SK-N-SH (cell line): ENCODE measurements at regions of chr14 and their contacts with region 1.

Region 1: GRCh38 chr14:34875031-34875922 is at the start of gene BAZ1A:
- DNase-seq: peak; percentile 78
- H3K4me3 ChIP-seq: peak within 1 kb of the TSS; percentile 86 to 91
- H3K27ac ChIP-seq: peak within 1 kb of the TSS; percentile 95 to 98
- H3K4me1 ChIP-seq: peaks cover 3 to 6% of the 10 kb centered on the region in 2 experiments; a peak in 3 of 4 replicates
- H3K27me3 ChIP-seq: no peaks in the 10 kb centered on the region
- CTCF ChIP-seq: peak; percentile 14; the same call in 1 of the 2 replicates
- EP300 ChIP-seq: no peak
- RAD21 ChIP-seq: no peak
- polyA plus RNA-seq, gene BAZ1A: 17.4 and 19.3 TPM in 2 replicates

Region 2: GRCh38 chr14:34826661-34827060 is 48.6 kb before region 1 on chr14:
- CTCF ChIA-PET with region 1: no interaction called
- POLR2A ChIA-PET with region 1: no interaction called
- DNase-seq: no peak
- H3K4me3 ChIP-seq: no peak overlapping the region
- H3K27ac ChIP-seq: no peak overlapping the region
- H3K4me1 ChIP-seq: no peaks in the 10 kb centered on the region
- H3K27me3 ChIP-seq: no peaks in the 10 kb centered on the region
- CTCF ChIP-seq: no peak
- EP300 ChIP-seq: no peak
- RAD21 ChIP-seq: no peak

Region 3: DNA sequence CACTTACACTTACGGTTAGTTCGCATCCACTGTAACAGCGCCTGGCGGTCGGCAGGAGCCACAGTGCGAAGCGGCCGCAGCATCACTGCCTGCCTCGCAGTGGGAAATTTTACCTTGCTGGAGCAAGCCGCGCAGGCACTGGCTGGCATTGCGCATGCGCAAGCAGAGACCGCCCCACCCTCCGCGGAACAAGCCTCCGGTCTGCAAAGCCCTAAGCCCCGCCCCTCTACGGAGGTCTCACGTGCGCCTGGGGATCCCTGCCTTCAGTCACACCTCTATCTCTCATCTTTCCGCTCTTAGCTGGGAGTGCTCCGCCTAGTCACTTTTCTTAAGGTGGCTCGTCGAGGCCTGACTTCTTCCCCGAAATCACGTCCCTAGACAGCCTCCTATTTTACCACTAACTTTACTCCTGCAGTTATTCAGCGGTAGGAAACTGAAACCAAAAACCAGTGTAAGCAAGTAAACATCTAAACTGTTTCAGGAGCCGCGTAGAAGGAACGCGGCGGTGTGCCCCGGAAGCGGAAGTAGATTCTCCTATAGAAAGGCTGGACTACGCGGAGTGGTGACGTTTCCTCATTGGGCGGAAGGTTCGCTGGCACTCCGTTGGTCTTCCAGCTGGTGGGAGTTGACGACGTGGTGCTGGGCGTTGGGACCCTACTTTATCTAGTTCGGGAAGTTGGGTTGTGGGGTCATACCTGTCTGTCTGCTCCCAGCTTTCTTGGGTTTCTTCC is 107.3 kb after region 1 on chr14 and contains the start of gene SRP54:
- CTCF ChIA-PET with region 1: interaction called, 6 read pairs
- POLR2A ChIA-PET with region 1: interaction called, 18 read pairs
- DNase-seq: peak; percentile 94
- H3K4me3 ChIP-seq: peak within 1 kb of the TSS; percentile 72 to 83
- H3K27ac ChIP-seq: peak within 1 kb of the TSS; percentile 98 to 100
- H3K4me1 ChIP-seq: peaks cover 7 to 14% of the 10 kb centered on the region in 2 experiments
- H3K27me3 ChIP-seq: no peaks in the 10 kb centered on the region
- CTCF ChIP-seq: no peak
- EP300 ChIP-seq: no peak
- RAD21 ChIP-seq: no peak; the same call in 1 of the 2 replicates
- polyA plus RNA-seq, gene SRP54: 31.6 and 39.5 TPM in 2 replicates

Region 4: DNA sequence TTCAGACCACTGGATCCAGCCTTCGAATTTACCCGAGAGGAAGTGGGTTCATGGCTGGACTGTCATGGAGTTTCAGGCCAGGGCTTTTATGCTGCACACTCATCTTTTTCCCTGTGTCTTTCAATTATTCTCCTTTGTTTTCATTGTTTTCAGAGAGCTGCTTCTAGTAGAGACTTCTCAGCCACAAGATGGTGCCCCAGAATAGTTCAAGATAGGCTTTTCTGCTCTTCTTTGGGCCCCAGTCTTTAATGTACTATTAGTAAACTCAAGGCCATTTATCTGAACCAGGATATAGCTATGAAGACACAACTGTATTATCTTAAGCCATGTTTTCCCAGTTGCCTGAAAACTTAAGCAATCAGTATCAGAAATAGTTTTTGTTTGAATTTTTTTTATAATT is 386.5 kb after region 1 on chr14:
- CTCF ChIA-PET with region 1: no interaction called
- POLR2A ChIA-PET with region 1: no interaction called
- DNase-seq: no peak
- H3K4me3 ChIP-seq: no peak overlapping the region
- H3K27ac ChIP-seq: no peak overlapping the region
- H3K4me1 ChIP-seq: no peaks in the 10 kb centered on the region; a peak in 1 of 4 replicates
- H3K27me3 ChIP-seq: no peaks in the 10 kb centered on the region
- CTCF ChIP-seq: no peak
- EP300 ChIP-seq: no peak
- RAD21 ChIP-seq: peak; percentile 15; the same call in 1 of the 2 replicates